ENCODE measurements at regions of chr7 and their contacts with region 1.

Region 1: DNA sequence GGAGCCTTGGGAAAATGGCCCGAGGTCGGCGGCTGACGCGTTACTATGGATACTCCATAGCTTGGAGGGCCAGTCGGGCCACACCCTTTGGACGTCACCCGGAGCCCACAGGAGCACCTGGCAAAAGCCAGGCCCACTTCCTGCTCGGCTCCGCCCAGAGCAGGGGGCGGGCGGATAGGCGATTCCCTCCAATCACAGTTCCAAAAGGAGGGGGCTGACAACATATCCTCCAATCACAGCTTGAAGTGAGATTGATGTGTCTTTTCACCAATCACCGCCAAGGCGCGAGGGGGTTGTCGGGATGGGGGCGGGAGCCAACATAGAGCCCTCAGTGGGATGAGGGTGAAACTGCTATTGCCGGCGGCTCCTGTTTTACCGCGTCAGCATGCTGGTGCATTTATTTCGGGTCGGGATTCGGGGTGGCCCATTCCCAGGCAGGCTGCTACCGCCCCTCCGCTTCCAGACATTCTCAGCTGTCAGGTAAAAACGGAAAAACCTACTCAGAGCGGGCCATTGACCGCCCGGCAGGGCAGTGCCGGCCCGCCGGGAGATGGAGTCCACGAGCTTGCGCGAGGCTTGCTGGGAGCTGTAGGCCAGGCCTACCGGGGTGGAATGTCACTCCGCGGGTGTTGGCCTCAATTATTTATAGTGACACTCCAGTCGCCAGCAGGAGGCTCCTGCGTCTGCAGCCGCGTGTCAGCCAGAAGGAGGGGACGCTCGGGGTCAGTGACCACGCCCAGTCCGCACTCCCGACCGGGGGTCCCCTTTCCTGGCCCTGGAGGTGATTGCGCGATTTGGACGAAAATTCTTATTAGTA is at the start of gene ABCB8:
- DNase-seq: peak; percentile 97 to 100
- H3K4me3 ChIP-seq: peak within 1 kb of the TSS; percentile 65 to 90
- H3K27ac ChIP-seq: peak within 1 kb of the TSS; percentile 82
- H3K4me1 ChIP-seq: peaks cover 21% of the 10 kb centered on the region
- H3K27me3 ChIP-seq: no peaks in the 10 kb centered on the region
- CTCF ChIP-seq: peak; percentile 4 to 31 (median 31)
- POLR2A ChIP-seq: peak in 1 of 2 donors; percentile 57
- total RNA-seq, gene ABCB8: 38.3 TPM

Region 2: GRCh38 chr7:150898475-150899011 is 129.8 kb before region 1 on chr7:
- intact Hi-C with region 1: no loop called
- DNase-seq: no peak
- H3K4me3 ChIP-seq: no peak overlapping the region
- H3K27ac ChIP-seq: no peak overlapping the region
- H3K4me1 ChIP-seq: no peaks in the 10 kb centered on the region
- H3K27me3 ChIP-seq: no peaks in the 10 kb centered on the region
- CTCF ChIP-seq: peak; percentile 86 to 98 (median 95)
- POLR2A ChIP-seq: no peak

Region 3: DNA sequence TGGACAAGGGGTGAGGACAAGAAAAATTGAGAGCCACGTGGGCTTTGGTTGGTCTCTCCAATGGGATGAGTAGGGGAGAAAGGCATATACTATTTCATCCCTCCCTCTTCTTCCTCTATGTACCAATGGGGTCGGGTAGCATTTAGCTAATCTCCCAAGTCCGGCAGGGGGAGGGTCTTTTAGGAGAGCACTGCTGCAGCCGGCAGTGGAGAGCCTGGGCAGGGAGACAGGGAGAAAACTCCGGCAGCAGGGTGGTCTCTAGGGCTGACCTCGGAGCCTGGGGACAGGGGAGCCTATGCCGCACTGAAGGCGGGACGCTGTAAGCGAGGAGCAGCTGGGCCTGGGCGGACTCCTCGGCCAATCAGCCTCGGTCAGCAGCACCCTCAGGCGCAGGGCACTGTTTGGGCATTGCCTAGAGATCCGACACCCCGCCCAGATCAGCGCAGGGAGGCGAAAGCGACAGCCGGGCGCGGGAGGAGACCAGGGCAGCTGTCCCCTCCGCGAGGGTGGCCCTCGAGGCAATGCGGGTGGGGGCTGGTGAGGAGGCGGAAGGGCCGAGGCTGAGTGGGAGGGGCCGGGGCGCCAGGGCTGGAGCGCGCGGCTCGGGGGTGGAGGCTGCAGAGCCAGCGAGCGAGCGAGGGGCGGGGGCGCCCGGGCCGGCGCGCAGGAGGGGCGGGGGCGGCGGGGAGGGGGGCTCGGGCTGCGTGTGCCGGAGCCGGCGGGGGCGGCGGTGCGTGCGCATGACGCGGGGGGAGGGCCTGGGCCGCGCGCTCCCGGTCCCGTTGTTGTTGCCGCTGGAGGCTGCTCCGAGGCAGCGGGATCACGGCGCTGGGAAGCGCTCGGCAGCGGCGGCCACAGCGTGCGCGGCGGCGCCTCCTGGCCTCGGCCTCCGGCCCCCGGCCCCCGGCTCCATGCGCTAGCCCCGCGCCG is 57.6 kb after region 1 on chr7 and contains the start of gene AGAP3:
- intact Hi-C with region 1: loop called (anchors 2 kb)
- DNase-seq: no peak
- H3K4me3 ChIP-seq: peak within 1 kb of the TSS; percentile 80 to 82
- H3K27ac ChIP-seq: peak within 1 kb of the TSS; percentile 97
- H3K4me1 ChIP-seq: peaks cover 70% of the 10 kb centered on the region
- H3K27me3 ChIP-seq: no peaks in the 10 kb centered on the region
- CTCF ChIP-seq: no peak
- POLR2A ChIP-seq: peak in 1 of 2 donors; percentile 60
- total RNA-seq, gene AGAP3: 98.2 TPM

Region 4: GRCh38 chr7:151185762-151186631 is 157.7 kb after region 1 on chr7:
- intact Hi-C with region 1: no loop called
- DNase-seq: no peak
- H3K4me3 ChIP-seq: no peak overlapping the region
- H3K27ac ChIP-seq: no peak overlapping the region
- H3K4me1 ChIP-seq: no peaks in the 10 kb centered on the region
- H3K27me3 ChIP-seq: no peaks in the 10 kb centered on the region
- CTCF ChIP-seq: no peak
- POLR2A ChIP-seq: no peak

Measured in vagina (tissue), 2 donors.